ENCODE measurements at regions of chr10 and their contacts with region 1.

Region 1: GRCh38 chr10:124388823-124389612 is 29.7 kb downstream of the OAT start:
- DNase-seq: peak; percentile 53
- H3K4me3 ChIP-seq: peak overlapping the region; percentile 53
- H3K27ac ChIP-seq: peak overlapping the region; percentile 21
- H3K27me3 ChIP-seq: peaks cover 2% of the 10 kb centered on the region
- CTCF ChIP-seq: peak; percentile 83

Region 2: GRCh38 chr10:123994417-123995081 is 394.5 kb before region 1 on chr10:
- CTCF ChIA-PET with region 1: interaction called, 319 read pairs
- POLR2A ChIA-PET with region 1: interaction called, 4 read pairs
- DNase-seq: peak; percentile 61
- H3K4me3 ChIP-seq: peak overlapping the region; percentile 41
- H3K27ac ChIP-seq: peak overlapping the region; percentile 93
- H3K27me3 ChIP-seq: peaks cover 10% of the 10 kb centered on the region
- CTCF ChIP-seq: peak; percentile 91

Region 3: DNA sequence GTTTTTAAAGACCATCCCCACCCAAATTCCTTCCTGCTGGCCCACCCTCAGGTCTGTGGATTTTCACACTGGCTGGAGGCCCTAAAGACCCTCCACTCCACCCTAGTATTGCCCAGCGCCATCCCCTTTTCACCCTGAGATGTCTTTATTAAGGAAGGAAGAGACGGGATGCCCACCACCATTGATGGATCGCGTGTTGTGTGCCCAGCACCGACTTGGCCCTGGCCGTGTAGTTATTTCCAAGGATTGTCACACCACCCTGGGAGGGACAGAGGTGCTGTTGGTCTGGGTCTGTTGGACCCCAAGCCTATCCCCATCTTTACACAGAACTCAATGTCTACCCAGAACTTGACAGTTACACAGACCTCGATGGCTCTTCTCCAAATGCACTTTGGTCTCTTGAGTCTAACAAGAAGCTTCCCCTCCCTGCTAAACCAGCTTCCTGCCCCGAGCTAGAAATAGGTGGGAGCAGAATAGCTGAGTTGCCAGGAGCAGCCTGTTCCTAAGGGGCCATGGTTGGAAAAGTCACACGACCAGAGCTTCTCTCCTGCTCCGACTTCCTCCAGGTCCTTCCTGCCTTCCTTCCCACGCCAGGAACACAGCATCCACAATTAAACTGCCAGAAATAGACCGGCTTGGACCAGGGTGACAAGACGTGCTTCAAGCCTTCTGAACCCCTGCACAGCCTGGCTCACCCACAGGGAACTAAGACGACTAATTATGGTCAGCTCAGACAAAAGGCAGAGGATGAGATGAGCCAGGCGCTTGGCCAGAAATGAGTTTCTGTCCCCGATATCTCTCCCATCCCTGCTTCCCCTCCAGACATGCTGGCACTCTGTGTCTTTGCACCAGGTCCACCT is 156.1 kb before region 1 on chr10:
- CTCF ChIA-PET with region 1: no interaction called
- POLR2A ChIA-PET with region 1: no interaction called
- DNase-seq: no peak
- H3K4me3 ChIP-seq: no peak overlapping the region
- H3K27ac ChIP-seq: no peak overlapping the region
- H3K27me3 ChIP-seq: no peaks in the 10 kb centered on the region
- CTCF ChIP-seq: no peak

Region 4: GRCh38 chr10:124259139-124259825 is 129.7 kb before region 1 on chr10:
- CTCF ChIA-PET with region 1: interaction called, 21 read pairs
- POLR2A ChIA-PET with region 1: no interaction called
- DNase-seq: no peak
- H3K4me3 ChIP-seq: no peak overlapping the region
- H3K27ac ChIP-seq: no peak overlapping the region
- H3K27me3 ChIP-seq: no peaks in the 10 kb centered on the region
- CTCF ChIP-seq: peak; percentile 28; the same call in 1 of the 2 replicates

Region 5: DNA sequence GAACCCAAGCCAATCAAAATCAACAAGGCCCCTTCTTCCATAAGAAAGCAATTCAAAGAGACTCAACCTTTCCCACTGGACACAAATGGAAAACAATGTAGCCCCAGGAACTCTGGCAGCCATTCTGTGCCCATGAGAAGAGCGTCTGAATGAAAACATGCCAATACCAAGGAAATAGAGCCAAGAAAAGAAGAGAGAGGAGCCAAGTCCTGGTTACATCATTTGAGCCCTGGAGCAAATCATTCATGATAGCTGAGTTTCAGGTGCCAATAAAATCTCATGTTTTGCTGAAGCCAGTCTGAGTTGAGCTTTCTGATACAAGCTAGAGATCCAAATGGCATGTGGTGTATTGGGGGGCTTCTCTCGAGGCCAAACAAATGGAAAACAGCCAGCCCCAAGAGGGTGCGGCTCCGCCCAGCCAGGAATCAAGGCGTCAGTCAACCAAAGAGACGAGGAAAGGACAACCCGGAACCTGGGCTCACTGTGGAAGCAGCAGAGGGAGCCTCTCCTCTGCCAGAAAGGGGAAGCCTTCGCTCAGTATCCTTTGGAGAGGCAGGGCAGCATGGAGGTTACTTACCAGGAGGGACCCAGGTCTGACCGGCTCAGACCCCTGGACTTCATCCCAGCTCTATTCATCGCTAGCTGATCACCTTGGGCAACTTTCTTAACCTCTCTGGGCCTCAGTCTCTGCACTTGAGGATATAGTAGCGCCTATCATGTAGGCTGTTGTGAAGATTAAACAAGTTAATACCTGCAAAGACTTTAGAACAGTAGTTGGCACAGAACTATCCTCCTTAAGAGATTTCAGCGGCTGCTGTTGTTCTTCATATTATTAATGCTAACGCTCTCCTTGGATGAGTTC is 32.1 kb before region 1 on chr10:
- CTCF ChIA-PET with region 1: interaction called, 17 read pairs
- POLR2A ChIA-PET with region 1: no interaction called
- DNase-seq: no peak
- H3K4me3 ChIP-seq: no peak overlapping the region
- H3K27ac ChIP-seq: no peak overlapping the region
- H3K27me3 ChIP-seq: no peaks in the 10 kb centered on the region
- CTCF ChIP-seq: no peak

Region 6: GRCh38 chr10:124378881-124379471 is 10.0 kb before region 1 on chr10:
- CTCF ChIA-PET with region 1: interaction called, 23 read pairs
- POLR2A ChIA-PET with region 1: no interaction called
- DNase-seq: no peak
- H3K4me3 ChIP-seq: no peak overlapping the region
- H3K27ac ChIP-seq: no peak overlapping the region
- H3K27me3 ChIP-seq: peaks cover 10% of the 10 kb centered on the region
- CTCF ChIP-seq: no peak

Region 7: GRCh38 chr10:124417895-124418725 is 29.1 kb after region 1 on chr10:
- CTCF ChIA-PET with region 1: interaction called, 13 read pairs
- POLR2A ChIA-PET with region 1: no interaction called
- DNase-seq: no peak
- H3K4me3 ChIP-seq: peak overlapping the region; percentile 70
- H3K27ac ChIP-seq: peak overlapping the region; percentile 77
- H3K27me3 ChIP-seq: peaks cover 11% of the 10 kb centered on the region
- CTCF ChIP-seq: peak; percentile 8; the same call in 1 of the 2 replicates